ENCODE measurements at regions of chr1 and their contacts with region 1.

Region 1: GRCh38 chr1:168439456-168440375 is 104.1 kb downstream of the XCL2 start:
- DNase-seq: peak; percentile 88 to 90
- H3K4me3 ChIP-seq: no peak overlapping the region
- H3K4me1 ChIP-seq: no peaks in the 10 kb centered on the region
- H3K27me3 ChIP-seq: 0 out of 2 replicates have a peak, but pooled peaks cover 4% of the 10 kb centered on the region

Region 2: DNA sequence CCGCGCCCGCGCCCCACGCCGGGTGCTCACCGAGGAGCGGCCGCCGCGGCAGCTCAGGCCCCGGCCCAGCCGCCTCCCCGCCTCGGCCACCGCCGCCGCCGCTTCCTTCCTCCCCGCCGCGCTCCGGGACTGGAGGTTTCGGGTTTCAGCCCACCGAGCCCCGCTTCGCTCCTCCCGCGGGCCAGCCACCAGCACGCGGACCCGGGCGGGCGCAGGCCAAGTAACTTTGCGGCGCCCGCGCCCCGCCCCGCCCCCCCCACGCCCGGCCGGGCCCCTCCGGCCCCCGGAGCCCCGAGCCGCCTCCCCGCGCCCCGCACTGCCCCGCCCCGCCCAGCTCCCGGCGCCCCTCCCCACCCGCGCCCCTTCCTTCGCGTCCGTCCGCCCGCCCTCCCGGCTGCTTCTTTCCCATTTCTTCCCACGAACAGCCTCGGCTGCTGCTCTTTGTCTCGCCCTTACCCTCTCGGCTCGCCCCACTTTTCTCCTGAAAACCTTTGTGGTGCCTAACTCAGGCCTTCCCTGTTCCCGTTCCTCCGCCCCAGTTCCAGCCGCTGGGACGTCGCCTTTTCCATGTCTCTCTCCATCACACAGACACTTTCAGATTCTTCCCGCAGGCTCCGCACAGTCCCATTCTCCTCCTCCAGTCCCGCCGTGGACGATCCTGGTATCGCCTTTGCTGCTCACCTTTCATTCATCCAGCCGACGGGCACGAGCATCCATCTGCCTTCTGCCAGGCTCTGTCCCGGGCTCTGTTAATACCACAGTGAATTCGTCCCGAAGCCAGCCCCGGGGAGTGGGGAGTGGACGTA is 302.8 kb before region 1 on chr1 and contains the start of gene GPR161:
- in situ Hi-C with region 1: no loop called
- DNase-seq: peak; percentile 47 to 70
- H3K4me3 ChIP-seq: peak within 1 kb of the TSS; percentile 60
- H3K4me1 ChIP-seq: peaks cover 15% of the 10 kb centered on the region
- H3K27me3 ChIP-seq: no peaks in the 10 kb centered on the region

Region 3: DNA sequence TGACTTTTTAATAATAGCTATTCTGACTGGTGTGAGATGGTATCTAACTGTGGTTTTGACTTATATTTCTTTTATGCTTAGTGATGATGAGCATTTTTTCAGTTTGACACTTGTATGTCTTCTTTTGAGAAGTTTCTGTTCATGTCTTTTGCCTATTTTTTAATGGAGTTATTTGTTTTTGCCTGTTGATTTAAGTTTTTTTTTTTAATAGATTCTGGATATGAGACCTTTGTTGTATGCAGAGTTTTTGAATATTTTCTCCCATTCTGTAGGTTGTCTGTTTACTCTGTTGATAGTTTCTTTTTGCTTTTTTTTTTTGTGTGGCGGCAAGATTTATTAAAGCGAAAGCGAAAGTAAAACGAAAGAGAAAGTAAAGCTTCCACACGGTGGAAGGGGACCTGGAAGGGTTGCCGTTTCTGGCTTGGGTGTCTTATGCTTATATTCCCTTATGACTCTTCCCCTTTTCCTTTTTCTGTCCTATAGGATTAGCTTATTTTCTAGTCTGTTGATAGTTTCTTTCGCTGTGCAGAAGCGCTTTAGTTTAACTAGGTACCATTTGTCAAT is 91.5 kb before region 1 on chr1:
- in situ Hi-C with region 1: no loop called
- DNase-seq: peak in 1 of 2 experiments; percentile 11
- H3K4me3 ChIP-seq: peak overlapping the region; percentile 23
- H3K4me1 ChIP-seq: no peaks in the 10 kb centered on the region
- H3K27me3 ChIP-seq: 0 out of 2 replicates have a peak, but pooled peaks cover 2% of the 10 kb centered on the region

Region 4: GRCh38 chr1:168483539-168483938 is 43.8 kb after region 1 on chr1:
- in situ Hi-C with region 1: no loop called
- DNase-seq: no peak
- H3K4me3 ChIP-seq: no peak overlapping the region
- H3K4me1 ChIP-seq: no peaks in the 10 kb centered on the region
- H3K27me3 ChIP-seq: no peaks in the 10 kb centered on the region; the same call in 1 of the 2 replicates

Region 5: DNA sequence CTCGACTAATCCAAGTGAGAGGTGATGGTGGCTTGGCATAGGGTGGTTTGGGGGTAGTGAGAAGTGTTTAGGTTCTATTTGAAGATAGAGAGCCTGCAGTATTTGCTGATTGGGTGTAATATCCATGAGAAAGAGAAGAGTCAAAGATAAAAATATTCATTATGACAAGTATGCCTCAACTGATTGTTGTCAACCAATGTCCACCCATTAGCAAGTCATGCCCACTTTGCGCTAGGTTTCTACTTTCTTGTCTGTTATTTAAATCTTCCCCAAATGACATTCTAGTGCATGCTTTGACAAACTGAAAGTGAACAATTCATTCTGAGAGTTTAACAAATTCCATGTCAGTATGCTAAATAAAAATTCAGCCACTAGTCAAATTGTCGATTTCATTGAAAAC is 132.9 kb after region 1 on chr1:
- in situ Hi-C with region 1: loop called (anchors 10 kb)
- DNase-seq: no peak
- H3K4me3 ChIP-seq: no peak overlapping the region
- H3K4me1 ChIP-seq: no peaks in the 10 kb centered on the region
- H3K27me3 ChIP-seq: peaks cover 11% of the 10 kb centered on the region; the same call in 1 of the 2 replicates